Activated CD4-positive, alpha-beta T cell treated with anti-CD3 and anti-CD28 coated beads for 36 hours (primary cell): ENCODE measurements at regions of chr1 and their contacts with region 1.

Region 1: DNA sequence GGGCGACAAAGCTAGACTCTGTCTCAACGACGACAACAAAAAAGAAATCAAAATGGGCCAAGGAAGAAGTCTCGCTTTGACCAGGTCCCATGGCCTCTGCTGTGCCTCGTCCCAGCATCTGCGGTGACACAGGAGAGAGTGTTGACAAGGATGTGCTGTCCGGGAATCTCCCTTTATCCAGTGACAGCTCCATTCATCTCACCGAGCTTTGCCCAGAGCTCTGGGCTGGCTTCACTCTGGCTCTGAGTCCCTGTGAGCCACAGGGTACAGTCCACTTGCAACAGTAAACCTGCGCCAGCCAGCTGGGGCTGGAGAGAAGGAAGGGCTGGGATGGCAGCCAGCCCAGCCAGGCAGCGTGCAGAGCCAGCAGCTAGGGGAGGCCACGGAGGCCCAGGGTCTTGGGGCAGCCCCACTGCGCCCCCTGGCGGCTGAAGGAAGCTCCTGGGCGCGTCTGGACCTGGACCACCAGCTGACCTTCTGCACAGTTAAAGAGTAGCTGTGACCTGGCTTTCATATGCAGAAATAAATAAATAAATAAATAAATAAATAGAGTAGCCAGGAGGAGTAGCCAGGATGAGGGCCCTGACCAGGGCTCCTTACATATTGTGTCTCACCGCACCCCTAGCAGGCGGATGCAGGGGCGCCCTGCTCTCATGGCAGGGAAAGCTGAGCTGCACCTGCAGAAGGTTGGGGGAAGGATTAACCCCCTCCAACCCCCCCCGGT is 29.7 kb downstream of the ENO1 start:
- DNase-seq: peak; percentile 89
- ATAC-seq: peak; percentile 98
- H3K4me3 Mint-ChIP-seq: no peak overlapping the region
- H3K27ac Mint-ChIP-seq: no peak overlapping the region
- H3K4me1 Mint-ChIP-seq: peaks cover 7% of the 10 kb centered on the region
- H3K27me3 Mint-ChIP-seq: no peaks in the 10 kb centered on the region

Region 2: DNA sequence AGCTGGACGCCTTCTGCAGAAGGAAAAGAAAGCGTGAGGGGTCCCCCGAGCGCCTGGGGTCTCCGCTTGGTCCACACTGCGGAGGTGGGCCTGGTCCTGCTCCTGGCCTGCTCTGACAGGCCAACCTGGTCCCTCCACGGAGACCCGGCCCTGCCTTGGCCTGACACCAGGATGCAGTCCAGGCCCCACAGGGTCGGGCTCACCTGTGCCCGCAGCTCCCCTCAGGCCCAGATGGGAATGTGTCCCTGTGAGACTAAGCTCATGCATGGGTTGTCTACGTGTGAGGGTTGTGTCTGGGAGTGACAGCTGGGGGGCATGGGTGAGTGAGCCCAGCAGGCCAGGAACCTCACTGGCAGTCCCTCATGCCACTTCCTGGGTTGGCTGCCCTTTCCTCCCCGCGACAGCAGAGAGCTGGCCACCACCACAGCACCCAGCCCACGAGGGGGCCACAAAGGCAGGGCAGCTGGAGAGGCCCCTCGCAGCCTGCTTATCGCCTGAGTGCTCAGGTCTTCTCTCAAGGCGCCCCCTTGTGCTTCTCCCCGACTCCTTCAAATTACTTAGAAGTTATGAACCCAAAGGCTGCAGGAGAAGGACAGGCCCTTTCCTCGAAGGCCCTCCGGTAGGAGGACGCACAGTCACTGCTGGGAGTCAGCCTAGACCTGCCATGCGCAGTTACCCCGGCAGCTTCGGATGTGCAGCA is 489.8 kb before region 1 on chr1:
- CTCF ChIA-PET with region 1: no interaction called
- POLR2A ChIA-PET with region 1: no interaction called
- intact Hi-C with region 1: no loop called
- DNase-seq: no peak
- ATAC-seq: no peak
- H3K4me3 Mint-ChIP-seq: no peak overlapping the region
- H3K27ac Mint-ChIP-seq: no peak overlapping the region
- H3K4me1 Mint-ChIP-seq: no peaks in the 10 kb centered on the region
- H3K27me3 Mint-ChIP-seq: no peaks in the 10 kb centered on the region

Region 3: DNA sequence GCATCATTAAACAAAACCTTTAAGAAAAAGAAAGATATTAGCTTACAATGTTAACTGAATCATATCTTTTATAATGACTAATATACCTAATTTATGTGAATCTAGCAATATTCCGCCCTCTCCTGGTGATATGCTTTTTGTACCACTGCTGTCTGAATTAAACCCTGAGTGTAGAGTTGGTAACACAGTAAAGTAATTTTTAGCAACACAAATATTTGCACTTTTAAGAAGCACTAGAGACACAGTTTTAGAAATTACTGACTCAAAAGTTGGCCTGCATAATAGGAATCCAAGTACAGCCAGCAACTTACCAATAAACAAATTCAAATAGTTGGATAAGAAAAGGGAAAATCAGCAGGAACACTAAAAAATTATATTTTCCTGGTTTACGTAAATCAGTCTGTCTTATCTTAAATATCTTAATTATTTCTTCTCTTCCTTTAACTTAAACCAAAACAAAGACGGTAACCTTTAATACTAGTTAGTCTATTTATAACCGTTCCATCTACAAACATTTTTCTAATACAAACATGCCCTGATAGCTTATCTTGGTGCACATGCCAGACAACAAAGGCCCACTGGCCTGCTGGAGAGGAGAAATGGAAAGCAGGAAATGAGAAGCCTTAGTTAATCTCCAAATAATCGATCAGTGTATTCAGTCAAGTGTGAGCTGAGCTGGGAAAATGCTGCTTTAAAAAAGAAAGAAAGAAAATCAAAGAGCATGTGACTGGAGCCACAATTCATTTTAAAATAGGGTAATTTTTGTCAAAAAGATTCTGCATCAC is 277.4 kb before region 1 on chr1:
- CTCF ChIA-PET with region 1: interaction called, 14 read pairs
- POLR2A ChIA-PET with region 1: no interaction called
- intact Hi-C with region 1: no loop called
- DNase-seq: no peak
- ATAC-seq: no peak
- H3K4me3 Mint-ChIP-seq: no peak overlapping the region
- H3K27ac Mint-ChIP-seq: no peak overlapping the region
- H3K4me1 Mint-ChIP-seq: peaks cover 6% of the 10 kb centered on the region
- H3K27me3 Mint-ChIP-seq: no peaks in the 10 kb centered on the region

Region 4: GRCh38 chr1:8727809-8728213 is 121.0 kb before region 1 on chr1:
- CTCF ChIA-PET with region 1: interaction called, 23 read pairs
- POLR2A ChIA-PET with region 1: no interaction called
- intact Hi-C with region 1: loop called (anchors 5 to 10 kb)
- DNase-seq: no peak
- ATAC-seq: no peak
- H3K4me3 Mint-ChIP-seq: no peak overlapping the region
- H3K27ac Mint-ChIP-seq: no peak overlapping the region
- H3K4me1 Mint-ChIP-seq: peaks cover 16% of the 10 kb centered on the region
- H3K27me3 Mint-ChIP-seq: no peaks in the 10 kb centered on the region

Region 5: GRCh38 chr1:8835941-8836643 is 12.7 kb before region 1 on chr1:
- CTCF ChIA-PET with region 1: interaction called, 17 read pairs
- POLR2A ChIA-PET with region 1: interaction called, 4 read pairs
- intact Hi-C with region 1: no loop called
- DNase-seq: no peak
- ATAC-seq: no peak
- H3K4me3 Mint-ChIP-seq: no peak overlapping the region
- H3K27ac Mint-ChIP-seq: no peak overlapping the region
- H3K4me1 Mint-ChIP-seq: peaks cover 2% of the 10 kb centered on the region
- H3K27me3 Mint-ChIP-seq: no peaks in the 10 kb centered on the region

Region 6: GRCh38 chr1:9004700-9005394 is 156.0 kb after region 1 on chr1:
- CTCF ChIA-PET with region 1: interaction called, 17 read pairs
- POLR2A ChIA-PET with region 1: no interaction called
- intact Hi-C with region 1: no loop called
- DNase-seq: peak; percentile 91
- ATAC-seq: peak; percentile 95
- H3K4me3 Mint-ChIP-seq: no peak overlapping the region
- H3K27ac Mint-ChIP-seq: no peak overlapping the region
- H3K4me1 Mint-ChIP-seq: no peaks in the 10 kb centered on the region
- H3K27me3 Mint-ChIP-seq: no peaks in the 10 kb centered on the region